Posterior vena cava (tissue), 2 donors: ENCODE measurements at regions of chr12 and their contacts with region 1.

Region 1: GRCh38 chr12:13509740-13510139 is 313.2 kb downstream of the EMP1 start:
- DNase-seq: no peak

Region 2: GRCh38 chr12:12946686-12947355 is 562.9 kb before region 1 on chr12:
- intact Hi-C with region 1: loop called in 1 of 2 experiments (anchors 10 kb)
- DNase-seq: no peak